ENCODE measurements at regions of chr4 and their contacts with region 1.

Region 1: DNA sequence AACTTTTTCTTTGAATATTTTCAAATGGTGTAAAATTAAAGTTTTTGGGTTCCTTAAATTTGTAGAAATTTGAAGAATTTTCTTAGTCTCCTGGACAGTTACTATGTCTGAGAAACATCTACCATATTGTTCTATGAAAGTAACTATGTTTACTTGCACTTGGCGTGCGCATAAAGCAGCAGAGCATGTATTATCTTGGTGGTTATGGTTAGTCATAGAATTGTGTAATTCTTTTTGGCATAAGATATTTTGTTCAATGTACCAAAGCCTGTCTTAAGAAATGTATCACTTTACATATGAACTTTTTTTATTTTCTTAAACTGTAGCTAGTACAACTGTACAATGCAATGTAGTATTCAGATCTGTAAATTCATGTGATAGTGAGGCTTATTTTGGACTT is 49.2 kb downstream of the CDS1 start:
- DNase-seq: peak; percentile 79
- H3K4me3 ChIP-seq: peak overlapping the region in 2 of 3 experiments; percentile 15 to 51
- H3K27ac ChIP-seq: peak overlapping the region; percentile 93
- H3K4me1 ChIP-seq: peaks cover 30% of the 10 kb centered on the region
- H3K27me3 ChIP-seq: no peaks in the 10 kb centered on the region
- CTCF ChIP-seq: no peak

Region 2: DNA sequence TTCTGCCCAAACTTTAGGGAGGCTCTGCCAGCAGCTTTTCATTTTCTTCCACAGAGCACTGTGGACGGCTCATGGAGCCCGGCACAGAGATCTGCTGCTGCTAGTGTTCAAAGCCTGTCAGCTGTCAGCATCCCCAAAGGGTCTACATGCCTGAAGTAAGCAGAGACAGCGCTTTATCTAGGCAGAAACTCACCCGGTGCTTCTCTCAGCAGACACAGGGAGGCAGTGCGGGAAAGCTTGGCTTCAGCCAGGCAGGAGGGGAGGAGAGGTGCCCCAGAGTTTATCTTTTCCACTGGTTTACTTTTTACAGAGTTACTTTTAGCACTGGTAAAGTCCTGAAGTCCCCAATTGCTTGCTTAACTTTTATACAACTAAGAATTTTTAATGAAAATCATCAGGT is 472.3 kb before region 1 on chr4:
- CTCF ChIA-PET with region 1: no interaction called
- dilution Hi-C with region 1: no loop called
- in situ Hi-C with region 1: no loop called
- intact Hi-C with region 1: no loop called
- DNase-seq: no peak
- H3K4me3 ChIP-seq: no peak overlapping the region
- H3K27ac ChIP-seq: no peak overlapping the region
- H3K4me1 ChIP-seq: no peaks in the 10 kb centered on the region
- H3K27me3 ChIP-seq: peaks cover 10% of the 10 kb centered on the region
- CTCF ChIP-seq: peak; percentile 16 to 34

Region 3: DNA sequence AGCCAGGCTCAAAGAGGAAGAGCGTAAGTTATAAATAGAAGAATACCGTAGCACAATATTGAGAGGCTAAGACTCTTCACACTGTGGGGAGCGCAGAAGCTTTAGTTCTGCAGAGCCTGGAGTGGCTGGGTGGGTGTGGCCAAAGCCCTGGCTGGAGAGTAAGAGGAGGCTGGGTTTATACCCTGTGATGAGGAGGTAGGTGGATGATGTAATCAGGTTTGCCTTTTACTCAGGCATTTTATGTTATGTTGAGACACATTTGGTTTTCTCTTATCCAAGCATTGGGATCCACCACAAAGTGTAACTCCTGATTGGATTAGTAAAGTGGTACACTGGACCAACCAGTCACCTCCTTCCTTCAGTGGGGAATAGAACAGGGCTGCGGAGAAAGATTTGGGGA is 35.3 kb before region 1 on chr4:
- CTCF ChIA-PET with region 1: interaction called, 3 read pairs
- dilution Hi-C with region 1: no loop called
- in situ Hi-C with region 1: no loop called
- intact Hi-C with region 1: loop called (anchors 5 kb)
- DNase-seq: peak; percentile 82
- H3K4me3 ChIP-seq: no peak overlapping the region
- H3K27ac ChIP-seq: peak overlapping the region; percentile 87
- H3K4me1 ChIP-seq: peaks cover 19% of the 10 kb centered on the region
- H3K27me3 ChIP-seq: no peaks in the 10 kb centered on the region
- CTCF ChIP-seq: no peak